ENCODE measurements at regions of chr10 and their contacts with region 1.

Region 1: DNA sequence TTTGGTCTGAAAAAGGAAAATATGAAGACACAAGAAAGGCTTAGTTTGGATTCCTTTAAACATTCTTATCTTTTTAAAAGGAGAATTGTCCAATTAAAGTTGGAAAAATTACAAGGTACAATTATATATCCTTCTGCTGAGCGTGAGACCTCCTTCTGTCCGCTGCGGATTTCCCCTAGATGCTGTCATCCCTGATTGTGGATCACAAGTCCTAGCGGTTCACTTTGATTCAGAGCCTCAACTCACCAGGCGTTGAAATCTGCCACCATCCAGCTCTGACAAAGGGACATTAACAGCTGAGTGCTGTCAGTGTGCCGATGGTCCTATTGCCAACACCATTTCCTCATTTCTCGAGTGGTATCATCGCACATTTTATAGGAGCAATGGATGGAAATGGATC is 73.1 kb upstream of the PTER start:
- DNase-seq: no peak
- ATAC-seq: no peak
- H3K4me3 ChIP-seq: no peak overlapping the region
- H3K27ac ChIP-seq: no peak overlapping the region
- H3K4me1 ChIP-seq: no peaks in the 10 kb centered on the region
- H3K27me3 ChIP-seq: no peaks in the 10 kb centered on the region
- CTCF ChIP-seq: no peak

Region 2: DNA sequence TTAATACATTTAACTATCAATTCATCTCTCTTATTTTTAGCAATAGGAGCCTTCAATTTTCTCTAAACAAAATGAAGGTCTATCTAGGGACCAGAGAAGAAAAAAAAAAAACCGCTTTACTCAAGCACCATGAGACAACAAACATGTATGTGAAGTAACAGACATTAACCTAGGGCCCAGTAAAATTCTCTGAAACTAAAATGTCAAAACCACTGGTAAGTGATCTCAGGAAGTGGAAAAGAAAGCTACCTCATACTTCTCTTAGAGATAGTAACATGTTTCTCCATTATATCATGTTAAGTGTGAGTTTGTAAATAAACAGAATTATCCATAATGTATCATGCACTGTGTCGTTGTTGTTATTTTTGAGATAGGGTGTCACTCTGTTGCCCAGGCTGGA is 37.7 kb after region 1 on chr10:
- CTCF ChIA-PET with region 1: no interaction called
- POLR2A ChIA-PET with region 1: no interaction called
- in situ Hi-C with region 1: no loop called
- intact Hi-C with region 1: no loop called
- DNase-seq: no peak
- ATAC-seq: no peak
- H3K4me3 ChIP-seq: no peak overlapping the region
- H3K27ac ChIP-seq: no peak overlapping the region
- H3K4me1 ChIP-seq: no peaks in the 10 kb centered on the region
- H3K27me3 ChIP-seq: no peaks in the 10 kb centered on the region
- CTCF ChIP-seq: no peak

Region 3: GRCh38 chr10:17768957-17769356 is 1405.2 kb after region 1 on chr10:
- CTCF ChIA-PET with region 1: no interaction called
- POLR2A ChIA-PET with region 1: interaction called, 21 read pairs
- in situ Hi-C with region 1: no loop called
- intact Hi-C with region 1: no loop called
- DNase-seq: no peak
- ATAC-seq: no peak
- H3K4me3 ChIP-seq: no peak overlapping the region
- H3K27ac ChIP-seq: no peak overlapping the region
- H3K4me1 ChIP-seq: no peaks in the 10 kb centered on the region
- H3K27me3 ChIP-seq: no peaks in the 10 kb centered on the region
- CTCF ChIP-seq: no peak

Region 4: GRCh38 chr10:17961551-17962422 is 1598.0 kb after region 1 on chr10:
- CTCF ChIA-PET with region 1: no interaction called
- POLR2A ChIA-PET with region 1: no interaction called
- in situ Hi-C with region 1: no loop called
- intact Hi-C with region 1: no loop called
- DNase-seq: no peak
- ATAC-seq: no peak
- H3K4me3 ChIP-seq: no peak overlapping the region
- H3K27ac ChIP-seq: no peak overlapping the region
- H3K4me1 ChIP-seq: no peaks in the 10 kb centered on the region
- H3K27me3 ChIP-seq: no peaks in the 10 kb centered on the region
- CTCF ChIP-seq: no peak